Activated CD4-positive, alpha-beta memory T cell treated with anti-CD3 and anti-CD28 coated beads for 36 hours (primary cell): ENCODE measurements at regions of chr3 and their contacts with region 1.

Region 1: GRCh38 chr3:47420511-47421484 is 40.0 kb downstream of the PTPN23 start:
- DNase-seq: peak; percentile 95
- H3K4me3 Mint-ChIP-seq: peak overlapping the region; percentile 54
- H3K27ac Mint-ChIP-seq: peak overlapping the region; percentile 94
- H3K4me1 Mint-ChIP-seq: peaks cover 12% of the 10 kb centered on the region
- H3K27me3 Mint-ChIP-seq: no peaks in the 10 kb centered on the region

Region 2: GRCh38 chr3:47433796-47434195 is 13.0 kb after region 1 on chr3:
- CTCF ChIA-PET with region 1: interaction called, 12 read pairs
- POLR2A ChIA-PET with region 1: no interaction called
- intact Hi-C with region 1: no loop called
- DNase-seq: no peak
- H3K4me3 Mint-ChIP-seq: no peak overlapping the region
- H3K27ac Mint-ChIP-seq: no peak overlapping the region
- H3K4me1 Mint-ChIP-seq: peaks cover 5% of the 10 kb centered on the region
- H3K27me3 Mint-ChIP-seq: no peaks in the 10 kb centered on the region

Region 3: DNA sequence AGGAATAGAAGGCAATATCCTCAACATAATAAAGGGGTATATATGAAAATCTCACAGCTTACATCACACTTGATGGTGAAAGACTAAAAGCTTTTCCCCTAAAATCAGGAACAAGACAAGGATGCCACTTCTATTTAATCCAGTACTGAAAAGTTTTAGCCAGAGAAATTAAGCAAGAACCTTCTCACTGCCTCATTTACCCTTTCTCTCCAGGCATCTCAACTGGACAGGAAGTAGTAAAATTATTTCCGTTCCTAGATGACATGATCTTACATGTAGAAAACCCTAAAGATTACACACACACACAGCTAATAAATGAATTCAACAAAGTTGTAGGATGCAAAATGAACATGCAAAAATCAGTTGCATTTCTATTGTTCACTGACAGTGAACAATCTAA is 43.8 kb after region 1 on chr3:
- CTCF ChIA-PET with region 1: interaction called, 17 read pairs
- POLR2A ChIA-PET with region 1: interaction called, 3 read pairs
- intact Hi-C with region 1: no loop called
- DNase-seq: no peak
- H3K4me3 Mint-ChIP-seq: no peak overlapping the region
- H3K27ac Mint-ChIP-seq: no peak overlapping the region
- H3K4me1 Mint-ChIP-seq: peaks cover 31% of the 10 kb centered on the region
- H3K27me3 Mint-ChIP-seq: no peaks in the 10 kb centered on the region

Region 4: DNA sequence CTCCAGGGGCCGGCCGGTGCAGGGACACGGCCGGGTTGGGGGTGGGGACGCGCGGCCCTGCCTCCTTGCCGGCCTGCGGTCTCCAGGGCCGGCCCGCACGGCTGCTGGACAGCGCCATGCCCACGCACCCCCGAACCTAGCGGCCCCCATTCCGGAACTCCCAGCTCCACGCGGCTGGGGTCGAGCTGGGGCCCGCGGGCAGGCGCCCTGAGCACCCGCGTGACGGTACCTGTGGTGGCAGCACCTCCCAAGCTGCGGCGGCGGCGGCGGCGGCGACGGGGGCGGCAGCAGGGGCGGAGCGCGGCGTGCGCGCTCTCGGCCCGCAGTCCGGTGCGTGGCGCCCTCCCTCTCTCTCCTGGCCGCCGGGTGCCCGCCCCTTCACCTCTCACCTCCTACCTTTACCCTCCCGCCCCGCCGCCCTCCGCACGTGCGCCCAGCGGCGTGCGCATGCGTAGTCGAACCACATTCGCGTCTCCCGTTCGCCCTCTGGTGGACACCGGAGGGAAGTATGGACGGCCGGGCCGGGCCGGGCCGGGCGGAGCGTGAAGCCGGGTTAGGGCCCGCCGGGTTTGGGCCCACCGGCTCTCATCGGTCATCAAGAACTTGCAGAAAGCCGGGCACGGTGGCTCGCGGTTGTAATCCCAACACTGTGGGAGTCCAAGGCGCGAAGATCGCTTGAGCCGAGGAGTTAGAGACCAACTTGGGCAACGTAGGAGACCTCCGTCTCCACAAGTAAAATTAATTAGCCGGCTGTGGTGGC is 55.0 kb after region 1 on chr3 and contains the start of gene SCAP:
- CTCF ChIA-PET with region 1: interaction called, 144 read pairs
- POLR2A ChIA-PET with region 1: interaction called, 13 read pairs
- intact Hi-C with region 1: loop called (anchors 1 kb)
- DNase-seq: peak; percentile 97
- H3K4me3 Mint-ChIP-seq: peak within 1 kb of the TSS; percentile 86
- H3K27ac Mint-ChIP-seq: peak within 1 kb of the TSS; percentile 81
- H3K4me1 Mint-ChIP-seq: peaks cover 33% of the 10 kb centered on the region
- H3K27me3 Mint-ChIP-seq: no peaks in the 10 kb centered on the region
- total RNA-seq, gene SCAP: 44.5 to 44.6 TPM

Region 5: GRCh38 chr3:47513125-47513929 is 92.5 kb after region 1 on chr3 and contains the start of gene ELP6:
- CTCF ChIA-PET with region 1: interaction called, 32 read pairs
- POLR2A ChIA-PET with region 1: interaction called, 3 read pairs
- intact Hi-C with region 1: loop called (anchors 1 kb)
- DNase-seq: peak; percentile 98
- H3K4me3 Mint-ChIP-seq: peak within 1 kb of the TSS; percentile 97
- H3K27ac Mint-ChIP-seq: peak within 1 kb of the TSS; percentile 98
- H3K4me1 Mint-ChIP-seq: peaks cover 20% of the 10 kb centered on the region
- H3K27me3 Mint-ChIP-seq: no peaks in the 10 kb centered on the region
- total RNA-seq, gene ELP6: 32.7 to 32.8 TPM

Region 6: DNA sequence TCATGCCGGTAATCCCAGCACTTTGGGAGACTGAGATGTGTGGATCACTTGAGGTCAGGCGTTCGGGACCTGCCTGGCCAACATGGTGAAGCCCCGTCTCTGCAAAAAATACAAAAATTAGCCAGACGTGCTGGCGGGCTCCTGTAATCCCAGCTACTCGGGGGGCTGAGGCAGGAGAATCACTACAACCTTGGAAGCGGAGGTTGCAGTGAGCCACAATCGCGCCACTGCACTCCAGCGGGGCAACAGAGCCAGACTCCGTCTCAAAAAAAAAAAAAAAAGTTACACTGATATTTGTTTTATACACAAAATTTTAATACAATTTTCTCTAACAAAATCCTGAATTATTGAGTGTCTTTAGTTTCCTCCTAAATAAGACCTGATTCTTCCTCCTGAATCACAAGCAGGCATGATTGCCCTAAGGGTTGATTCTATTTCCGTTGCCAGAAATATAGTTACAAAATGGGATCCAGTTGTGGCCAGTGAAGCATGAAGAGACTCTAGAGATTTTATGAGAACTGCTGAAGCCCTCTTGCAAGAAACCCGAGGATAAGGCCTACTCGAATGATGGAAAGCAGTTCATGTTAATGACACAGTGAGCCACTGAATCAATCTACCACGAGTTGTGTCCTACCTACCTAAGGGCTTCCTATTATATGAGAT is 370.5 kb after region 1 on chr3:
- CTCF ChIA-PET with region 1: interaction called, 5 read pairs
- POLR2A ChIA-PET with region 1: no interaction called
- intact Hi-C with region 1: loop called (anchors 1 kb)
- DNase-seq: no peak
- H3K4me3 Mint-ChIP-seq: no peak overlapping the region
- H3K27ac Mint-ChIP-seq: no peak overlapping the region
- H3K4me1 Mint-ChIP-seq: no peaks in the 10 kb centered on the region
- H3K27me3 Mint-ChIP-seq: no peaks in the 10 kb centered on the region